PC-9 (cell line): ENCODE measurements at regions of chr4 and their contacts with region 1.

Region 1: DNA sequence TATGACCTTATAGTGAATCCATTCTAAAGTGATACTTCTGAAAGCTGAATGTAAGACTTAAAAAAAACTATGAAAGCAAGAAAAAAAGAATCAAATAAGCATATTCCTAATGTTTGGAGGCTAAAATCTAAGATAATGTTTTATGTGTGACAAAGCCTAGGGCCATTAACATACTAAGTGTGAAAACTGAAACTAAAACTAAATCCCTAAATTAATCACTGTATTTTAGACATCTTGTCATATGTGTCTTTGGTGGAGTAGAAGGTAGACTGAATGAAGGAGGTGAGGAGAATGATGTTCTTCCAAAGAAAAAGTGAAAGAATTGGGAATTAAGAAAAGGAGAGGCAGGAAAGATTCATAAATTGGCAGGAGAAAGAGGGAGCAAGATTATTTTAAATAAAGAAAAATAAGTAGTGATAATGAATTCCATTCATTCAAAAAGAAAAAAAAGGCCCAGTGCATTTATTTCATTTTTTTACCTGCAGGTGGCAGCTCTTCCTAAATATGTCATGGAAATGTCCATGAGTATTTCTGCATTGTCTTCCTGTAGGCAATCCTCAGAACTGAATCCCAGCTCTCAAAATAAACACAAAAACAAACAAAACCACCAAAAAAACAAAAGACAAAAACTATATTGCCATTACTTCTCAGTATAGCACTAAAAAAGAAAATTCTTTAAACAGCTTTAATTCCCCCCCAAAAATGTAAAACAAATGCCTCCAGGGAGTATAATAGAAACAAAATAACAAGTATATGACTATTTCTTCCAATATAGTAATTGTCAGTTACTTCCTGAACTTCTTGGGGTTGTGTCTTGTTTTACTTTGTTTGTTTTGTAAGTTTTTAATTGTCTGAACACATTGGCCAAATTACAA is 17.0 kb upstream of the AP1AR start:
- DNase-seq: peak in 1 of 2 experiments; percentile 43
- H3K4me3 ChIP-seq: no peak overlapping the region
- H3K27ac ChIP-seq: peak overlapping the region; percentile 22
- H3K4me1 ChIP-seq: no peaks in the 10 kb centered on the region
- H3K27me3 ChIP-seq: no peaks in the 10 kb centered on the region
- CTCF ChIP-seq: peak; percentile 65; the same call in 1 of the 2 replicates

Region 2: DNA sequence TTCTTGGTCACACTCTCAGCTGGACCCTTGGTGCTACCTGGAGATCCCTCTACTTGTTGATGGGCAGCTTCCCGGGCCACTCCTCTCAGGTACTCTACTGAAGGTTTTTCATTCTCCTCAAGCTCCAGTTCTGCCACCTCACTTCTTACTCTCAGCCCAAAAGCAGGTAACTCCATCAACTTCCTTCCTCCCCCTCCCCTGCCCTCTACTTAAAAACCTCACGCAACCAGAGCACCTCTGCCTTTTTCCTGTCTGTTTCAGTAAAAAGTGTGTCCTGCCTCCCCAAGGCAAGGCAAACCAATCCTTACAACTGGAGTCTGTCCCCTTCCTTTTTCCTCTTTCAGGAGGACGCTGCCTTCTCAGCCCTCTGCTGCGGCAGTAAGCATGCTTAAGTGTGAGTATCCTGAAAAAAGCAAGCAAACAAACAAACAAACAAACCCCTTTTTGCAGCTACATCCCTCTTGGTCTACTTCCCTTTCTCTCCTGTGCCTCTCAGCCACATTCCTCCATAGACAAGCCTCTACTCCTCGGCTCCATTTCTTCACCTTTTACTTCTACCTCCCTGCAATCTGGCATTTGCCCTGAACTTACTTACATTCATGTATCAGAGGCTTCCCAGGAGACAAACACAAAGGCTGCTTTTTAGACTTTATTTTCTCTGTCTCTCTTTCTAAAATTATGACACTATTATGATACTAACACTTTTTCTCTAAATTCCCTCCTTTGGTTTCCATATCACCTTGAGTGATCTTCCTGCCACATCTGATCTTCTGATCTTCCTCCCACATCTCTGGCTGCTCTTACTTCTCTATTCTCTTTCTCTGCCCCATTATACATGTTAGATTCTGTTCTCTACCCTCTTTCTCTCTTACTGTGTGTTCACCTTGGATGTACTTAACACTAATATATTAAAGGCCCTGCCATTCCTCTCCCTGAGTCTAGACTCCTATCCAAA is 88.0 kb after region 1 on chr4:
- CTCF ChIA-PET with region 1: no interaction called
- POLR2A ChIA-PET with region 1: no interaction called
- intact Hi-C with region 1: no loop called
- DNase-seq: no peak
- H3K4me3 ChIP-seq: no peak overlapping the region
- H3K27ac ChIP-seq: no peak overlapping the region
- H3K4me1 ChIP-seq: peaks cover 9% of the 10 kb centered on the region
- H3K27me3 ChIP-seq: no peaks in the 10 kb centered on the region
- CTCF ChIP-seq: no peak

Region 3: GRCh38 chr4:112793033-112793432 is 578.4 kb after region 1 on chr4:
- CTCF ChIA-PET with region 1: no interaction called
- POLR2A ChIA-PET with region 1: interaction called, 18 read pairs
- intact Hi-C with region 1: no loop called
- DNase-seq: no peak
- H3K4me3 ChIP-seq: no peak overlapping the region
- H3K27ac ChIP-seq: no peak overlapping the region
- H3K4me1 ChIP-seq: no peaks in the 10 kb centered on the region
- H3K27me3 ChIP-seq: no peaks in the 10 kb centered on the region
- CTCF ChIP-seq: no peak